ENCODE measurements at regions of chr9 and their contacts with region 1.

Region 1: DNA sequence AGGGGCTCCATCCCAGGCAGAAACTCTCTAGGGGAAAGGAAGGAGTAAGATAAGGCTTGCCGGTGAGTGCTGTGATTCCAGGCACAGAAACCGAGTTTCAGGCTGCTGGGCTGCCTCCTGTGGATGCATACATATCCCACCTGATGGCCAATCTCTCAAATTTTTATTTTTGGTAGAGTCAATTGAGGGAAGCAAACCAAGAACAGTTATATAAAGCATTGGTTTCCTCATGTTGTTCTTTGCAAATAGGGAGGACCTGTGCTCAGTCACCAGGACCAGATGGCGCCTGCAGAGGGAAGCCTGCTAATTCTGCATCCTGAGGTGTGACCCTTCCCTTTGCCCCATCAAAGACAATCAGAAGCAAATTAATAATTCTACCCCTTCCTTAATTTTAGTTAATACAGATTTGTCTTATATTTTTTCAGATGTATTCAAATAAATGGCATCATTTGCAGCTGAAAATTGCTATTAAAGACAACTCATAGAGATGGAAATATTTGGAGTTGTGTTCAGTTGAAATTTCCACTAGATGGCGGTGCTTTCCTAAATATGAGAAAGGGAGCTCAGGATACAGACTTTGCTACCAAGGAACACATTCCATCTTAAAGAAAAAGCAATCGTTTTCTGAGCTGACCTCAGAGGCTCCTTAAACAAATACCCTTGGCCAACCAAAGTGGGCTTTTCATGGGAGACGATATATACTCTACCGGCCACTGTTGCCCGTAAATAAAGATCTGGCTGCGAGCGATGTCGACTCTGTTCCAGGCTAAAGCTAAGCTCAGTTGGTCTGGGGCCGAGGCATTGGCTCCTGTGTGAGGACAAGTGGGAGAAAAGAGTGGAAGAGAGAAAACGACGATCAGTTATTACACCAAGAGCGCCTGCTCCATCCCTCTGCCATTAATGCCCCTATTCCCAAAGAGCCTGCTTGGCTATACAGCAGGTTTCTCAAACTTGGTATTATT is 225.7 kb upstream of the KLF9 start:
- DNase-seq: no peak
- H3K4me3 ChIP-seq: no peak overlapping the region
- H3K27ac ChIP-seq: no peak overlapping the region
- H3K4me1 ChIP-seq: no peaks in the 10 kb centered on the region
- H3K27me3 ChIP-seq: no peaks in the 10 kb centered on the region
- CTCF ChIP-seq: peak; percentile 62 to 74 (median 68)
- POLR2A ChIP-seq: no peak

Region 2: GRCh38 chr9:71249729-71250317 is 609.7 kb after region 1 on chr9:
- intact Hi-C with region 1: loop called (anchors 10 kb)
- DNase-seq: peak; percentile 46
- H3K4me3 ChIP-seq: no peak overlapping the region
- H3K27ac ChIP-seq: no peak overlapping the region
- H3K4me1 ChIP-seq: no peaks in the 10 kb centered on the region
- H3K27me3 ChIP-seq: no peaks in the 10 kb centered on the region
- CTCF ChIP-seq: peak; percentile 69 to 89 (median 88)
- POLR2A ChIP-seq: no peak